MCF 10A (cell line): ENCODE measurements at regions of chr9 and their contacts with region 1.

Region 1: GRCh38 chr9:87662808-87663528 is 63.0 kb upstream of the CTSL start:
- DNase-seq: peak; percentile 84
- H3K4me3 Mint-ChIP-seq: no peak overlapping the region
- H3K27ac Mint-ChIP-seq: no peak overlapping the region
- H3K4me1 Mint-ChIP-seq: peaks cover 13% of the 10 kb centered on the region
- H3K27me3 Mint-ChIP-seq: no peaks in the 10 kb centered on the region
- CTCF ChIP-seq: peak; percentile 80

Region 2: DNA sequence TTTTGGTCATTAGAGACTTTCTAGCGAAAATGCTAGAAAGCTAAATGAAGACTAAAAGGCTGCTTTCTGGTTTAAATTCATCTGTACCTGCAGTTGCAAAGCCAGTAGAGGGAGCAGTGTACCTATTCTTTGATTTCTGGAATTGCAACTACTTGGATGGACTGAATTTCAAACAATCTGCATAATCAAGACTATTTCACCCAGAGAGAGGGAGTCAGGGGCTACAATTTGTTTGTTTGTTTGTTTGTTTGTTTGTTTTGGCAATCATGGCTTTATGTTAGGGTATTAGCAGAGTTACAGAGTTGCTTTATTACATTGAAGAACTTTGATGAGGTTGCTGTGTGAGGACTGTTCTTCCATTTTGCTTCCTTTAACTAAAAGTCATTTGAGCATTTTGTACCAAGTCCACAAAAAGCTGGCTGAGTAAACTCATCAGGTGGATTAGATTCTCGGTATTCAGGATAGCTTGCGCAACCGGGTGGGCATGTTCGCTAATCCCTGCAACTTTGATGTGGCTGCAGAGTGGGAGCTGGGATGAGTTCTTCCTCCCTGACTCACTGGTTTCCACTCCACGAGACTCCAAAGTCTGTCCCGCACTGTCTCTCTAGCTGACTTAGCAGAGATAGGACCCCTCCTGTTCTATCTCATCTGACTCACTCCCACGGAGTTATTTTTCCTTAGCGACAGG is 1228.8 kb before region 1 on chr9:
- CTCF ChIA-PET with region 1: interaction called, 6 read pairs
- POLR2A ChIA-PET with region 1: no interaction called
- intact Hi-C with region 1: loop called (anchors 1 kb)
- DNase-seq: peak; percentile 56
- H3K4me3 Mint-ChIP-seq: no peak overlapping the region
- H3K27ac Mint-ChIP-seq: no peak overlapping the region
- H3K4me1 Mint-ChIP-seq: peaks cover 13% of the 10 kb centered on the region
- H3K27me3 Mint-ChIP-seq: no peaks in the 10 kb centered on the region
- CTCF ChIP-seq: peak; percentile 73

Region 3: DNA sequence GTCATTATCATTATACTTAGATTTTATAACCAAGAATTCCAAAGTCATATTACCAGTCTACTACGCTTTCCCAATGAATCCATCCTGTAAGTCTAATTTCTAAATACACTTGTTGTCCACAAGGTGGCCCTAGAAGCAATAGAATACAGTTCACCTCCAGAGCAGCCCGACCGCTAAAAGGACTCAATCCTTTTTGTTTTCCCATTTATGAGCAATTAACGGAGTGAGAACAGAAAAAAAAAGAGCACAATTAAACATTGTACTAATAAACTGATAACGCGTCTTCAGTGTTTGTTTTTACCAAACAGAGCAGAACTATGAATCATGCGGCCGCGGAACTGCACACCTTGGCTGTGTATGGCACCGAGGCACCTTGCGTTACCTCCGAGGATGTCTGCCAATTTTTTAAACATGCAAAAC is 326.0 kb before region 1 on chr9:
- CTCF ChIA-PET with region 1: interaction called, 29 read pairs
- POLR2A ChIA-PET with region 1: interaction called, 3 read pairs
- intact Hi-C with region 1: loop called (anchors 1 kb)
- DNase-seq: peak; percentile 83
- H3K4me3 Mint-ChIP-seq: peak overlapping the region; percentile 80
- H3K27ac Mint-ChIP-seq: peak overlapping the region; percentile 61
- H3K4me1 Mint-ChIP-seq: peaks cover 19% of the 10 kb centered on the region
- H3K27me3 Mint-ChIP-seq: no peaks in the 10 kb centered on the region
- CTCF ChIP-seq: peak; percentile 73

Region 4: GRCh38 chr9:87375397-87376073 is 287.4 kb before region 1 on chr9:
- CTCF ChIA-PET with region 1: interaction called, 5 read pairs
- POLR2A ChIA-PET with region 1: interaction called, 8 read pairs
- intact Hi-C with region 1: loop called (anchors 1 kb)
- DNase-seq: peak; percentile 91
- H3K4me3 Mint-ChIP-seq: peak overlapping the region; percentile 26
- H3K27ac Mint-ChIP-seq: peak overlapping the region; percentile 85
- H3K4me1 Mint-ChIP-seq: peaks cover 34% of the 10 kb centered on the region
- H3K27me3 Mint-ChIP-seq: no peaks in the 10 kb centered on the region
- CTCF ChIP-seq: no peak

Region 5: GRCh38 chr9:87497604-87498045 is 165.3 kb before region 1 on chr9 and contains the start of gene DAPK1:
- CTCF ChIA-PET with region 1: interaction called, 3 read pairs
- POLR2A ChIA-PET with region 1: interaction called, 4 read pairs
- intact Hi-C with region 1: loop called (anchors 5 kb)
- DNase-seq: peak; percentile 12
- H3K4me3 Mint-ChIP-seq: peak within 1 kb of the TSS; percentile 73
- H3K27ac Mint-ChIP-seq: peak within 1 kb of the TSS; percentile 12
- H3K4me1 Mint-ChIP-seq: peaks cover 17% of the 10 kb centered on the region
- H3K27me3 Mint-ChIP-seq: no peaks in the 10 kb centered on the region
- CTCF ChIP-seq: no peak
- total RNA-seq, gene DAPK1: 19.7 and 35.7 TPM in 2 replicates

Region 6: DNA sequence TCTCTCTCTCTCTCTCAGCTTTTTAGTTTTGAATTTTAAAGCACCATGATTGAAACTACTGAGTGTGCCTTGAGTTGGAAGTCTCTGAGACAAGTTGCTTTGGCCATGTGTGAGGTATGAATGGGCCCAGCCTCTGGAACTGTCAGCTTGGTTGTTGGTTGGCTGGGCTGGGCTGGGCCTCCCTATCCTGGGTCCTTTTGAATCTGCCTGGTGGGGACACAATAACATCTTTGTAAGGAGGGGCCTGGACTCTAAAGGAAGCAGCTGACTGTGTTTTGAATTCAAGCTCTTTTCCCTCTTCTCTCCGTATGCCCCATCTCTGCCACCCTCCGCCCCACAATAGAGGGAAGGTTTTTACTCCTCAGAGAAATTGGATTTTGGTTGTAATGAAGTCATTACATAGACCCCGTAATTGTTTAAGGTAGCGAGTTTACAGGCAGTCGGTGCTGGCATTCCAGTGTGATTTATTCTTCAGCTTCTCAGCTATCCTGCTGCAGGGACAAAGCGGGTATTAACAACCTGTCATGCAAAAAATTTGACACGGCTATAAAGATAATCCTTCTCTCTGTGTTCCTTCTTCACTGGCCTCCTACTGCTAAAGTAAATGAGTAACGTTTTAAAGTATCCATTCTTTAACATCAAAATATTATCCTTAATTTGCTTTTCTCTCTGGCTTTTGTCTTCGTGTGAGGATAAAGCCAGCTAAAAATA is 59.9 kb before region 1 on chr9:
- CTCF ChIA-PET with region 1: no interaction called
- POLR2A ChIA-PET with region 1: no interaction called
- intact Hi-C with region 1: no loop called
- DNase-seq: no peak
- H3K4me3 Mint-ChIP-seq: no peak overlapping the region
- H3K27ac Mint-ChIP-seq: no peak overlapping the region
- H3K4me1 Mint-ChIP-seq: peaks cover 17% of the 10 kb centered on the region
- H3K27me3 Mint-ChIP-seq: no peaks in the 10 kb centered on the region
- CTCF ChIP-seq: no peak